MCF 10A (cell line): ENCODE measurements at regions of chr2 and their contacts with region 1.

Region 1: GRCh38 chr2:157327621-157328500 is 2.2 kb upstream of the ERMN start:
- DNase-seq: peak; percentile 74
- H3K4me3 Mint-ChIP-seq: no peak overlapping the region
- H3K27ac Mint-ChIP-seq: no peak overlapping the region
- H3K4me1 Mint-ChIP-seq: peaks cover 8% of the 10 kb centered on the region
- H3K27me3 Mint-ChIP-seq: no peaks in the 10 kb centered on the region
- CTCF ChIP-seq: peak; percentile 88

Region 2: GRCh38 chr2:157296490-157297357 is 31.1 kb before region 1 on chr2:
- CTCF ChIA-PET with region 1: interaction called, 145 read pairs
- POLR2A ChIA-PET with region 1: no interaction called
- intact Hi-C with region 1: no loop called
- DNase-seq: no peak
- H3K4me3 Mint-ChIP-seq: no peak overlapping the region
- H3K27ac Mint-ChIP-seq: no peak overlapping the region
- H3K4me1 Mint-ChIP-seq: no peaks in the 10 kb centered on the region
- H3K27me3 Mint-ChIP-seq: no peaks in the 10 kb centered on the region
- CTCF ChIP-seq: no peak

Region 3: GRCh38 chr2:157349949-157350515 is 22.2 kb after region 1 on chr2:
- CTCF ChIA-PET with region 1: interaction called, 12 read pairs
- POLR2A ChIA-PET with region 1: no interaction called
- intact Hi-C with region 1: no loop called
- DNase-seq: no peak
- H3K4me3 Mint-ChIP-seq: no peak overlapping the region
- H3K27ac Mint-ChIP-seq: no peak overlapping the region
- H3K4me1 Mint-ChIP-seq: no peaks in the 10 kb centered on the region
- H3K27me3 Mint-ChIP-seq: no peaks in the 10 kb centered on the region
- CTCF ChIP-seq: no peak

Region 4: DNA sequence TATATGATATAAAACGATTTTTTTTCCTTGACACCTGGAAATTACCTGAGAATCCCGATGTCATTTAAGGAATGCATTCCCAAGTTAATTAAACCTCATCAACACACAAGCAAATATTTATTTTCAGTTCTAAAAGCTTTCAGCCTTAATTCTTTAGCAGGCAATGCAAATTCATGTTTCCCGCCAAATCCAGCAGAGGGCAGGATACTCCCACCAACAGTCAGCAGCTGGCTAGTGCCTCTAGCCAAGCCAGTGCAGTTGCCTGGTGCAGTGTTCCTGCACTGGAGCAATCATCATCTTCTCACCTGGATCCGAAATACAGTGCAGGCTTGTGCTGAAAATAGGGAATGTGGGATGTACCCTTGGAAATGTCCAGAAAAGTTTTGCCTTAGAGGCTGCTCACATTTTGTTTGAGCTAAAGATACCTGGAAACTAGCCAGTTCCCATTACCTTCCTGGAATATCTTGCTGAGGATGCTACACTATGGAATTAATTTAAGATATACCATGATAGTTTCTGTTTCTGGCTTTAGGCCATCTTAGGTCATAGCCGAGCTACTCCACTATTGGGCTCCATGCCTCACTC is 164.4 kb after region 1 on chr2:
- CTCF ChIA-PET with region 1: interaction called, 9 read pairs
- POLR2A ChIA-PET with region 1: interaction called, 3 read pairs
- intact Hi-C with region 1: loop called (anchors 5 kb)
- DNase-seq: peak; percentile 73
- H3K4me3 Mint-ChIP-seq: no peak overlapping the region
- H3K27ac Mint-ChIP-seq: no peak overlapping the region
- H3K4me1 Mint-ChIP-seq: peaks cover 21% of the 10 kb centered on the region
- H3K27me3 Mint-ChIP-seq: no peaks in the 10 kb centered on the region
- CTCF ChIP-seq: peak; percentile 58